Left colon (tissue), 2 donors: ENCODE measurements at regions of chr14 and their contacts with region 1.

Region 1: GRCh38 chr14:91060351-91061055 is at the start of gene RPS6KA5:
- DNase-seq: peak; percentile 100
- ATAC-seq: peak; percentile 87
- total RNA-seq, gene RPS6KA5: 22.1 to 23.3 TPM

Region 2: GRCh38 chr14:90795746-90796145 is 264.8 kb before region 1 on chr14:
- intact Hi-C with region 1: no loop called
- DNase-seq: no peak
- ATAC-seq: no peak

Region 3: GRCh38 chr14:90894241-90894640 is 166.3 kb before region 1 on chr14:
- intact Hi-C with region 1: loop called in 1 of 2 experiments (anchors 10 kb)
- DNase-seq: no peak
- ATAC-seq: no peak